ENCODE measurements at regions of chr3 and their contacts with region 1.

Region 1: DNA sequence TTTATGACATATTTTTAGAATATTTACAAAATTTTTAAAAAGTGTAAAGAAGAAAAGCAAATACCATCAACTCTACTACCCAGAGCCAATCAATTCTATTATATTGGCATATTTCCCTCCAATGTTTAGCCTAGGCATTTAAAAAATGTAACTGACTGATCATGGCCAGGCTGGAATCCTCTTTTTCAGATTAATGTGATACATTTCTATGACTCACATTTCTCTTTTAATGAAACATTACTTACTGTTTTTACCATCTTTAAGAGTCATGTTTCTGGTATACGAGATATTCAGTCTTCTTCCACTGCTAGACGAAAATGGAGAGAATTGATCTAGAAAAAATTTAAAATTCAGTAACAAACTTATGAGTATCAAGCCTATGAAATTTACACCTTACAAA is 53.4 kb upstream of the DCUN1D1 start:
- DNase-seq: no peak
- H3K4me3 ChIP-seq: no peak overlapping the region
- H3K27ac ChIP-seq: no peak overlapping the region
- H3K4me1 ChIP-seq: no peaks in the 10 kb centered on the region
- H3K27me3 ChIP-seq: no peaks in the 10 kb centered on the region
- CTCF ChIP-seq: no peak

Region 2: DNA sequence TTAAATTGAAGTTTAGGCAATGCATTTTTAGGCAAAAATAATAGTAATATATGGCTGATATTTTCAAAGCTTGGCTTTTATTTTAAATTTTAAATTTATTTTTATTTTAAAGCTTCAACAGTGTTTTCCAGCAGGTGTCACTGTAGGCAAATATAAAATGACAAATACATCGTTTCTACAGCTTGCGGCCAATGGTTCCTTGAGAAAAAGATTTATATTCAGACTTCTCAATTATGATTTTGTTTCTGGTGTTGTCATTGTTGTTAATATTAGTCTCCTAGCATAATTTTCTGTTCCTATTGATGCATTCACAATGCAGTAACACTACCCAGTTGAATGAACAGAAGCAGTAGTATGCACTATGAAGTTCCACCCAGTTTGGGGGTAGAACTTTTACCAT is 1823.5 kb before region 1 on chr3:
- CTCF ChIA-PET with region 1: interaction called, 17 read pairs
- POLR2A ChIA-PET with region 1: no interaction called
- intact Hi-C with region 1: no loop called
- DNase-seq: no peak
- H3K4me3 ChIP-seq: no peak overlapping the region
- H3K27ac ChIP-seq: no peak overlapping the region
- H3K4me1 ChIP-seq: no peaks in the 10 kb centered on the region
- H3K27me3 ChIP-seq: no peaks in the 10 kb centered on the region
- CTCF ChIP-seq: peak; percentile 72

Region 3: GRCh38 chr3:182644800-182645433 is 388.8 kb before region 1 on chr3:
- CTCF ChIA-PET with region 1: no interaction called
- POLR2A ChIA-PET with region 1: no interaction called
- intact Hi-C with region 1: no loop called
- DNase-seq: peak in 1 of 2 experiments; percentile 34
- H3K4me3 ChIP-seq: no peak overlapping the region
- H3K27ac ChIP-seq: no peak overlapping the region
- H3K4me1 ChIP-seq: peaks cover 11% of the 10 kb centered on the region
- H3K27me3 ChIP-seq: no peaks in the 10 kb centered on the region
- CTCF ChIP-seq: no peak

Region 4: DNA sequence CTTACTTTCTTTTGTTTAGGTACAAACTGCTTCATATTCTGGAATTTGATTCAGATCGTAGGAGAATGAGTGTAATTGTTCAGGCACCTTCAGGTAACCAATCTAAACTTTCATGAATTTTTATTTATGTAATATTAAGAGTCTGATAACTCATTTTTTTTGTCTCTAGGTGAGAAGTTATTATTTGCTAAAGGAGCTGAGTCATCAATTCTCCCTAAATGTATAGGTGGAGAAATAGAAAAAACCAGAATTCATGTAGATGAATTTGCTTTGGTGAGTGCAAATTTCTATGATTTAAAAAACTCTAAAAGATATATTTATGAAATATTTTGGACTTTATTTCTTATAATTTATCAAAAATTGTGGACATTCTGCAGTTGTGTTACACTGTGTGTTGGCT is 164.7 kb before region 1 on chr3:
- CTCF ChIA-PET with region 1: no interaction called
- POLR2A ChIA-PET with region 1: no interaction called
- intact Hi-C with region 1: no loop called
- DNase-seq: no peak
- H3K4me3 ChIP-seq: no peak overlapping the region
- H3K27ac ChIP-seq: no peak overlapping the region
- H3K4me1 ChIP-seq: no peaks in the 10 kb centered on the region
- H3K27me3 ChIP-seq: no peaks in the 10 kb centered on the region
- CTCF ChIP-seq: no peak

Region 5: GRCh38 chr3:182937293-182938051 is 96.3 kb before region 1 on chr3:
- CTCF ChIA-PET with region 1: no interaction called
- POLR2A ChIA-PET with region 1: no interaction called
- intact Hi-C with region 1: no loop called
- DNase-seq: no peak
- H3K4me3 ChIP-seq: no peak overlapping the region
- H3K27ac ChIP-seq: no peak overlapping the region
- H3K4me1 ChIP-seq: no peaks in the 10 kb centered on the region
- H3K27me3 ChIP-seq: no peaks in the 10 kb centered on the region
- CTCF ChIP-seq: no peak

Measured in PC-9 (cell line).